Gastrocnemius medialis (tissue), 4 donors: ENCODE measurements at regions of chr15 and their contacts with region 1.

Region 1: DNA sequence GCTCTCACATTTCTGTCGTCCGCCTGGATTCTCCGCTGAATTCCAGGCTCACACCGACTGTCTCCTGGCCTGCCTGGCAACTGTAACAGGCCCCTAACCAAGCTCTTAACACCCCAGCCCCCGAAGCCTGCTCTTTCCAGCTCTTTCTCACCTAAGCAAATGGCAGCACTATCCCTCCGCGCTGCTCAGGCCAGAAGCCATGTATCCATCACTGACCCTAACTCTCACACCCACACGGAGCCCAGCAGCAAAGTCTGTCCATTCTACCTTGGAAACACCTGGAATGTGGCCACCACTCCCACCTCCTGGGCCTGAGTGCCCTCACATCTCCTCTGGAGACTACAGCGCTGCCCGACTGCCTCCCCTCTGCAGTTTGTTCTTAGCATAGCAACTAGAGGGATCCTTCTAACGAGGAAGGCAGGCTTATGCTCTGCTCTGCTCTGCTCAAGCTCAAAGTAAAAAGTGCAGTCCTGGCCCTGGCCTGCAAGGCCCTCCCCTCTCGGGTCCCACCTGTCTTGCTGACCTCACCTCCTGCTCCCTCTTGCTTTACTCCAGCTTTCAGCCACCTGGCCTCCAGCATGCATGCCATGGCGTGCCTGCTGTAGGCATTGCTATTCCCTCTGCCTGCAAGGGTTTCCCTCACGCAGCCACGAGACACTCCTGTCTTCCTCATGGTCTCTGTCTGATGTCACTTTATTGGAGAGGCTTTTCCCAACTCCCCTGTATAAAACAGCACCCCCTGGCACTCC is 27.2 kb downstream of the FEM1B start:
- DNase-seq: no peak
- ATAC-seq: no peak
- H3K4me3 ChIP-seq: no peak overlapping the region
- H3K27ac ChIP-seq: no peak overlapping the region
- H3K4me1 ChIP-seq: peaks cover 6 to 8% of the 10 kb centered on the region in 2 donors
- H3K27me3 ChIP-seq: no peaks in the 10 kb centered on the region
- CTCF ChIP-seq: no peak
- POLR2A ChIP-seq: no peak

Region 2: GRCh38 chr15:68372291-68372811 is 67.6 kb after region 1 on chr15:
- in situ Hi-C with region 1: loop called in 2 of 4 experiments (anchors 5 kb)
- intact Hi-C with region 1: loop called (anchors 1 kb)
- DNase-seq: no peak
- ATAC-seq: peak in 1 of 2 donors; percentile 37
- H3K4me3 ChIP-seq: no peak overlapping the region
- H3K27ac ChIP-seq: no peak overlapping the region
- H3K4me1 ChIP-seq: peaks cover 15 to 16% of the 10 kb centered on the region in 2 donors
- H3K27me3 ChIP-seq: no peaks in the 10 kb centered on the region
- CTCF ChIP-seq: peak; percentile 22 to 57 (median 39)
- POLR2A ChIP-seq: no peak

Region 3: GRCh38 chr15:68383161-68384074 is 78.7 kb after region 1 on chr15:
- in situ Hi-C with region 1: loop called (anchors 5 kb)
- intact Hi-C with region 1: loop called (anchors 1 kb)
- DNase-seq: no peak
- ATAC-seq: peak; percentile 51 to 70
- H3K4me3 ChIP-seq: no peak overlapping the region
- H3K27ac ChIP-seq: no peak overlapping the region
- H3K4me1 ChIP-seq: no peaks in the 10 kb centered on the region
- H3K27me3 ChIP-seq: peaks cover 0 to 2% (median 0%) of the 10 kb centered on the region in 3 donors
- CTCF ChIP-seq: peak; percentile 68 to 77 (median 76)
- POLR2A ChIP-seq: no peak

Region 4: GRCh38 chr15:68620721-68621527 is 316.2 kb after region 1 on chr15:
- in situ Hi-C with region 1: no loop called
- intact Hi-C with region 1: no loop called
- DNase-seq: peak; percentile 79 to 86
- ATAC-seq: peak; percentile 72 to 85
- H3K4me3 ChIP-seq: no peak overlapping the region
- H3K27ac ChIP-seq: peak overlapping the region; percentile 46 to 64 (median 60)
- H3K4me1 ChIP-seq: peaks cover 11% of the 10 kb centered on the region in 2 donors
- H3K27me3 ChIP-seq: no peaks in the 10 kb centered on the region
- CTCF ChIP-seq: no peak
- POLR2A ChIP-seq: peak in 1 of 2 donors; percentile 21